ENCODE measurements at regions of chr2 and their contacts with region 1.

Region 1: DNA sequence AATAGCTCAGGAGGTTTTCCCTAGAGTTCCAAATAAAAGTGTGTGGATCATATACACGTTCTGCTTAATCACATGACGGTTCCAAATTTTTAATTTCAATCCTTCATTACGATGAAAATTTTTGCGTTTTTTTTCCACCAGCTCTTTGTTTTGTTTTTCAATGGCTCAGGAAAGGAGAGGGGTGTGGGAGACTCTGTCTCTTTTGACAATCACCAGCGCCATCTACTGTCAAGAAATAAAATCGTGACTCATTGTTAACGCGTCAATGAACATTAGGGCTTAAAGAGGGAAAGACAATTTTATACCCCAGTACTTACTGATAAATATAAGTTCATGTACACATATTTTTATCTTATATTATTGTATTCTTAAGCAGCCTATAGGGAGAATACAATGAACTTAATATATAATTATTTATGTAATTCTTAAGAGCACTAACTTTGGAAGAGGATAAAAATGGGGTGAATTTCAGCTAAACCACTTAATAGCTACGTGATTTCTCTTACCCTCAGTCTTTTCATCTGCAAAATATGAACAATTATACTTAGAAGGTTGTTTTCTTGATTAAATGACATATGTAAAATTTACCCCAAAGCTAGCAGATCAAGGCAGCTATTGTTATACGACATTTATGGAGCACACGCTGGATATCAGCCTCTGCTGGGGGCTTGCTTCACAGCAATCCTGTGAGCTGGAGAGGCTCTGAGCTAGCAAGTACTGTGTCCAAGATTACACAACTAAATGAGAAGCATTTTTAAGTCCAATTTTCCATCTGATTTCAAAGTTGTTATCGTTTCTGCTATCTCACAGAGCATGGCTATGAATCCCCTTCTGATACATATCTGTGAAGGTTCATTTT is 47.4 kb upstream of the RMDN2 start:
- DNase-seq: peak; percentile 73
- H3K4me3 ChIP-seq: no peak overlapping the region
- H3K27ac ChIP-seq: no peak overlapping the region
- H3K4me1 ChIP-seq: peaks cover 3% of the 10 kb centered on the region
- H3K27me3 ChIP-seq: no peaks in the 10 kb centered on the region
- CTCF ChIP-seq: peak; percentile 31 to 39
- POLR2A ChIP-seq: no peak

Region 2: DNA sequence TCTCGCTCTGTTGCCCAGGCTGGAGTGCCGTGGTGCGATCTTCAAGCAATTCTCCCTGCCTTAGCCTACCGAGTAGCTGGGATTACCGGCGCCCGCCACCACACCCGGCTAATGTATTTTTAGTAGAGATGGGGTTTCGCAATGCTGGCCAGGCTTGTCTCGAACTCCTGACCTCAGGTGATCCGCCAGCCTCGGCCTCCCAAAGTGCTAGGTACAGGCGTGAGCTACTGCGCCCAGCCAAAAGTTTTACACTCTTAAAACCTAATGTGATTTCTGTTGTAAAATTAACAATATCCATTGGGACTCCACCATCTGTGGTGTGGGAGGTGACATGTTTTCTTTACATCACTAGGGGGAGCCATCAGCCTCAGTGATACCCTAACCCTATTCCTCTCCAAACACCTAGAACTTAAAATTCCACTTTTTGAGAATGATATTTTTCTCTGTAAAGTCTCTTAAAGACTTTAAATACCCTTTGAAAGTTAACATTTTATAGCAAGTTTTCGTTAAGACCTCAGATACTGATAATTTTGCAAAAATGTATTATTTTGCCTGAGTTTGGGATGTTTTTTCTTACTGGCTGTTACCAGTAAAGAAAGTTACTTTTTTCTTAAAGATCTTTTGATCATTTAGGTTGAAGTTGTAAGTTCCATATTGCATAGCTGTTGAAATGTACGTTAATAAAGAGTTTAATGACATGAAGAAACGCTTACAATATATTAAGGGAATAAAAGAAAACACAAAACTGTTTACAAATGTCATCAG is 709.3 kb before region 1 on chr2:
- CTCF ChIA-PET with region 1: interaction called, 10 read pairs
- POLR2A ChIA-PET with region 1: no interaction called
- dilution Hi-C with region 1: no loop called
- intact Hi-C with region 1: loop called (anchors 2 kb)
- DNase-seq: peak; percentile 56
- H3K4me3 ChIP-seq: no peak overlapping the region
- H3K27ac ChIP-seq: no peak overlapping the region
- H3K4me1 ChIP-seq: no peaks in the 10 kb centered on the region
- H3K27me3 ChIP-seq: no peaks in the 10 kb centered on the region
- CTCF ChIP-seq: peak; percentile 57 to 64
- POLR2A ChIP-seq: no peak

Region 3: GRCh38 chr2:37402636-37403035 is 475.1 kb before region 1 on chr2:
- CTCF ChIA-PET with region 1: interaction called, 399 read pairs
- POLR2A ChIA-PET with region 1: no interaction called
- dilution Hi-C with region 1: loop called (anchors 25 kb)
- intact Hi-C with region 1: no loop called
- DNase-seq: no peak
- H3K4me3 ChIP-seq: no peak overlapping the region
- H3K27ac ChIP-seq: no peak overlapping the region
- H3K4me1 ChIP-seq: no peaks in the 10 kb centered on the region
- H3K27me3 ChIP-seq: no peaks in the 10 kb centered on the region
- CTCF ChIP-seq: no peak
- POLR2A ChIP-seq: no peak

Region 4: GRCh38 chr2:37561615-37562569 is 315.8 kb before region 1 on chr2:
- CTCF ChIA-PET with region 1: interaction called, 10 read pairs
- POLR2A ChIA-PET with region 1: no interaction called
- dilution Hi-C with region 1: no loop called
- intact Hi-C with region 1: no loop called
- DNase-seq: peak; percentile 92
- H3K4me3 ChIP-seq: peak overlapping the region in 1 of 3 experiments; percentile 9
- H3K27ac ChIP-seq: peak overlapping the region; percentile 91
- H3K4me1 ChIP-seq: peaks cover 42% of the 10 kb centered on the region
- H3K27me3 ChIP-seq: no peaks in the 10 kb centered on the region
- CTCF ChIP-seq: no peak
- POLR2A ChIP-seq: no peak

Region 5: DNA sequence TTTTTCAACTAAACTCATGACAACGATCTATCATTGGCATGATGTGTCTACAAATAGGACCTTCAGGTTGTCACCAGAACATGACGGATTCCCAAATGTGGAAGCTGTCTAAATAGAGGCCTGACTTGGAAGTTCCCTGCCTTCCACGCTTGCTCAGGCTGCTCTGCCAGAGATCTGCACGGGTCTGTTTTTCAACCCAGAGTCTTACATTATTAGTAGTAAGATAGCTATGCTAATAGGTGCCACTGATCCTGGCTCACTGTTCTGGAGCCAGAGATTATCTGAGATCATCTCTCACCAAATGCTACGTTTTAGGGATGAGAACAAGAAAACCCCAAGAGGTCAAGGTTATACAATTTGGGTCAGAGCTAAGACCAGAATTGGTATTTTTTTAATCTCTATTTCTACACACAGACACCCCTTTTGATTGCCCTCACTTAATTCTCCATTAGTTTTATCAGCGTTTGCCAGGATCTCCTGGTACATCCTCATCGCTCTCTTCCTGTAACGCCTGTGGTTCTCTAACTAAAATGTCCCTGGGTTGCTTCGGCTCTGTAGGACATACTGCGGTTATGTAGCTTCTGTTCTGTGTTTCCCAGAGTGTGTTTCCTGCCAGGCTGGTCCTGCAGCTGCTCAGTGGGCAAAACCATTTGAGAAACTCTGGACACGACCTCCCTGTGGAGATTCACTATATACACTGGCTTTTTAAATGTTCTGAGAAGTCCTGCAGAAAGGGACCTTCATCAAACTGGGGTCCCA is 211.9 kb before region 1 on chr2:
- CTCF ChIA-PET with region 1: interaction called, 26 read pairs
- POLR2A ChIA-PET with region 1: no interaction called
- dilution Hi-C with region 1: no loop called
- intact Hi-C with region 1: loop called (anchors 5 kb)
- DNase-seq: no peak
- H3K4me3 ChIP-seq: no peak overlapping the region
- H3K27ac ChIP-seq: no peak overlapping the region
- H3K4me1 ChIP-seq: peaks cover 46% of the 10 kb centered on the region
- H3K27me3 ChIP-seq: no peaks in the 10 kb centered on the region
- CTCF ChIP-seq: no peak
- POLR2A ChIP-seq: no peak

Region 6: DNA sequence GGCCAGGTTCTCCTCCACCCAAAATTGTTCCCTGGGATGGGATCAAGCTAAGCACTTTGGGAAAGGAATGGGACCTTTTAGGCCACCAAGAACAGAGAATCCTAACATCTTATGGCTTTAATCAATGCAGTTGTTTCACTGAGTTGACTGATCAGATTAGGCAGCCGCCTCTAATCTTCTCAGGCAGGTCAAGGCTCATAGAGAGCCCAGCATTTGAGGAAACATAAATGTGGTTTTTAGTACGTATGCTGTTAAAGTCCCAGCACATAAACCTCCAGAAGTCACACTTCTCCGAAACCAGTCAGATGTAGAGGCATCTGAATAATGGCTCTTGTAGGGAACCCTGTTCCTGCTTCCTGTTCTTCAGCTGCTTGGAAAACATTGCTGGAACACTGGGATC is 52.1 kb before region 1 on chr2:
- CTCF ChIA-PET with region 1: interaction called, 270 read pairs
- POLR2A ChIA-PET with region 1: interaction called, 3 read pairs
- dilution Hi-C with region 1: no loop called
- intact Hi-C with region 1: no loop called
- DNase-seq: no peak
- H3K4me3 ChIP-seq: no peak overlapping the region
- H3K27ac ChIP-seq: no peak overlapping the region
- H3K4me1 ChIP-seq: peaks cover 38% of the 10 kb centered on the region
- H3K27me3 ChIP-seq: no peaks in the 10 kb centered on the region
- CTCF ChIP-seq: no peak
- POLR2A ChIP-seq: no peak

Region 7: DNA sequence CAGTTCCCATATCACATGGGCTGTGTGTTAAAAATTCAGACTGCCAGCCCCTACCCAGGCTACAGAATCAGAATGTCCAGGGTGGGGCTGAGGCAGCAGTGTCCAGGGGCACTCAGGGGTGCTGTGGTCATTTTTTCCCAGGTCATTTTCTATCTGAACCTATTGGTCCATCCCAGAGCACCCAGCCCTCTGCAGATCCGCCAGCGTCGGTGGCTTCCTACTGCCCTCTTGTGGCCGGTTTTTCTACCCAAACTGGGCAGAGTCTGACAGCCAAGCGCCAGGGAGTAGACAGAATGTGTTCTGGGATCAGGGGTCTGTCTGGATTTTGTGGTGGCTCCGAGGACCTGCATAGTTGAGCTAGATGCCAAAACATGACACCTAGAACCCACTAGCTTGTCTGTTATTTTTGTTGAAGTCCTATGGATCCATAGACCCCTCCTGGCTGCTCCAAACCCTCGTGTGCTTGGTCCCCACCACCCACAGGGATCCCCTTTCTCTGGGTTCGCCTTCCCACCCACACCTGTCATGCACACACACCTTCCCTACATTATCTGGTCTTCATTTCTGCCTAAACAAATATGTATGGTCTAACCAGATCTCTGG is 13.3 kb after region 1 on chr2:
- CTCF ChIA-PET with region 1: interaction called, 40 read pairs
- POLR2A ChIA-PET with region 1: no interaction called
- dilution Hi-C with region 1: no loop called
- intact Hi-C with region 1: no loop called
- DNase-seq: peak; percentile 69
- H3K4me3 ChIP-seq: no peak overlapping the region
- H3K27ac ChIP-seq: no peak overlapping the region
- H3K4me1 ChIP-seq: no peaks in the 10 kb centered on the region
- H3K27me3 ChIP-seq: no peaks in the 10 kb centered on the region
- CTCF ChIP-seq: peak; percentile 76 to 79
- POLR2A ChIP-seq: no peak

Region 8: GRCh38 chr2:38060236-38061018 is 182.7 kb after region 1 on chr2:
- CTCF ChIA-PET with region 1: no interaction called
- POLR2A ChIA-PET with region 1: no interaction called
- dilution Hi-C with region 1: no loop called
- intact Hi-C with region 1: no loop called
- DNase-seq: no peak
- H3K4me3 ChIP-seq: no peak overlapping the region
- H3K27ac ChIP-seq: no peak overlapping the region
- H3K4me1 ChIP-seq: no peaks in the 10 kb centered on the region
- H3K27me3 ChIP-seq: peaks cover 0 to 5% of the 10 kb centered on the region in 2 experiments
- CTCF ChIP-seq: no peak
- POLR2A ChIP-seq: no peak

Region 9: GRCh38 chr2:39642051-39642742 is 1764.5 kb after region 1 on chr2:
- CTCF ChIA-PET with region 1: no interaction called
- POLR2A ChIA-PET with region 1: no interaction called
- dilution Hi-C with region 1: no loop called
- intact Hi-C with region 1: no loop called
- DNase-seq: peak; percentile 61
- H3K4me3 ChIP-seq: no peak overlapping the region
- H3K27ac ChIP-seq: no peak overlapping the region
- H3K4me1 ChIP-seq: peaks cover 4% of the 10 kb centered on the region
- H3K27me3 ChIP-seq: peaks cover 0 to 3% of the 10 kb centered on the region in 2 experiments
- CTCF ChIP-seq: no peak
- POLR2A ChIP-seq: no peak